Posterior cingulate gyrus (tissue), 11 donors: ENCODE measurements at regions of chr12 and their contacts with region 1.

Region 1: DNA sequence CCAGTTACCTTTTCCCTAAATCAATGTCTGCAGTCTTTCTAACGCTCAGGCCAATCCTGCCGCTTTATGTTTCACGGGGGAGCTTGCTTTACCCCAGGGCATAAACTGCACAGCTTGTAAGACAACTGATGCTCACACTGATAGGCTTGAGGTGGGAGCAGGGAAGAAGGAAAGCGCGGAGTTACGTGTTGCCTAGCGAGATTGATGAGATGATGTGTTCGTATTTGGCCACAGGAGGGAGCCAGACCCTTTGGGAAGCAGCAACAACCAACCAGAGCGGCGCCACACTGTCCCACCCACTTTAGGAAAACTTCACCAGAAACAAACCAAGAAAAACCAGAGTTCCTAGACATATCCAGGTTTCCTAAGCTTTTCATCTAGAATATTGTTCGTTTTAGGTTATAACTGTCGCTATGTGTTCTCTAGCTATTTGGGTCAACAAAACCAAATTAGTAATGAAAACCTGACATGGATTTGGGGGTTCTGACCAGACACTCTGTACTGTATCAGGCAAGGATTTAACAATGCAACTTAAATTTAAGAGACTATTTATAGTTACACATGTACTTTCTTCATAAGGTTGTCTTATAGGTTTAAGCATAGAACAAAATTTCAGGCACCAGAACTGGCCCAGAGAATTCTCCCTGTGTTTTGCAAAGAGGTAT is 2.4 kb downstream of the IL26 start:
- DNase-seq: peak; percentile 48 to 95 (median 76)

Region 2: DNA sequence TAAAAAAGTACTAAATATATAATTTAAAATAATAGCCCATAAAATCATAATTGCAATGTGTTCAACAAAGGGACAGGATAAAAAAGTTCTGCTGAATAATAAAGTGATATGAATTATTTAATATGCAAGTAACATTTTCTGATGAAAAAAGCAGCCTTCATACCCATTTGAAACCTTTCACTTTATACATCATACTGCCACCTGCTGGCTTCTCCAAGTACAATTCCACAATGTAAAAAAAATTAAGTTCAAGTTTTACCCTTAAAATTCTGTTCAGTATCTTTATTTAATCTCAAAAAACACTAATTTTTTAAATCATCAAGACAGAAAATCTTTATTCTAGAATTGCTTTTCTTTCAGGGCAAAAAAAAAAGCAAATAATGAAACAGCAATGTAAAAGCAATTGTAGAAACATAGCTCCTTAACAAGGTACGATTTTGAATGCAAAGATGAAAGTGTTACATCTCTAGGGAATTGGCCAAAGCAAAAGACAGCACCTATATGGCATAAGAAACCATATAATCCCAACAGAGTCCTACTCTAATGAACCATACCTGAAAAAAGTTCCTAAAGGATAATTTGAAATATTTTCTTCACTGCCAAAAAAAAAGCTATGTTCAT is 93.9 kb after region 1 on chr12:
- intact Hi-C with region 1: loop called (anchors 1 kb)
- DNase-seq: peak in 1 of 10 donors; percentile 26

Region 3: DNA sequence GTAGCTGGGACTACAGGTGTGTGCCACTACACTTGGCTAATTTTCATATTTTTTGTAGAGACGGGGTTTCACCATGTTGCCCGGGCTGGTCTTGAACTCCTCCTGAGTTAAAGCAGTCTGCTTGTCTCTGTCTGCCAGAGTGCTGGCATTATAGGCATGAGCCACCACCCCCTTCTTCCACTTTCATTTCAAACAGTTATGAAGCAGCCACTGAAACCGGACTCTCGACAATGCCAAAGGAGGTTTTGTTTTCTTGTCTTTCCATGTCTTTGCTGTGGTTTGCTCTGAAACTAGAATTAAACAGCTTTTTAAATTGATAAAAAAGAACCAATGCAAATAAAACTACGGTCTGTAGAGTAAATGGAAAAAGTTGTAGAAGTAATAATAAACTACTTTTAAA is 417.9 kb after region 1 on chr12:
- intact Hi-C with region 1: no loop called
- DNase-seq: no peak